Sciatic nerve (tissue), 2 donors: ENCODE measurements at regions of chr15 and their contacts with region 1.

Region 1: GRCh38 chr15:68559345-68560310 is 19.2 kb upstream of the CORO2B start:
- DNase-seq: peak; percentile 88
- ATAC-seq: peak; percentile 96

Region 2: GRCh38 chr15:68304589-68305337 is 254.9 kb before region 1 on chr15:
- intact Hi-C with region 1: loop called (anchors 10 kb)
- DNase-seq: no peak
- ATAC-seq: no peak

Region 3: GRCh38 chr15:68464448-68465090 is 95.1 kb before region 1 on chr15:
- intact Hi-C with region 1: no loop called
- DNase-seq: no peak
- ATAC-seq: peak; percentile 29

Region 4: DNA sequence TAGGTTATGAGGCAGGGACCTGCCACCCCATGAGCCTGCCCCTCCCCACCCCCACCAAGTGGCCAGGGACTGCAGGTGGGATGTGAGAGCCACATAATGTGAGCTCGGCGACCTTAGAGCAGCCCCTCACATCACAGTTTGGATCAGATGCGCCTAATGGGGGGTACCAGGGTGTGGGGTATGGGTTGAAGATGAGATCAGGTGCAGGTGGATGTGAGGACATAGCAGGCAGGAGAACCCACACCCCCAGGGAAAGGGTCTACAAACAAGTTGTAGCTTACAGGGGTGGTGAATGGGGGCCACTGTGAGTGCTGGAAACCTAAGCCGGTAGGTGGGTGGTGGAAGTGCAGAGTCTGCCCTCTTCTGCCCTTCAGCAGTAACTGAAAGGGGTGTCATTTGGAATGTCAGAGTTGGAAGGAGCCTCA is 113.2 kb after region 1 on chr15:
- intact Hi-C with region 1: loop called (anchors 5 kb)
- DNase-seq: peak; percentile 51
- ATAC-seq: no peak

Region 5: DNA sequence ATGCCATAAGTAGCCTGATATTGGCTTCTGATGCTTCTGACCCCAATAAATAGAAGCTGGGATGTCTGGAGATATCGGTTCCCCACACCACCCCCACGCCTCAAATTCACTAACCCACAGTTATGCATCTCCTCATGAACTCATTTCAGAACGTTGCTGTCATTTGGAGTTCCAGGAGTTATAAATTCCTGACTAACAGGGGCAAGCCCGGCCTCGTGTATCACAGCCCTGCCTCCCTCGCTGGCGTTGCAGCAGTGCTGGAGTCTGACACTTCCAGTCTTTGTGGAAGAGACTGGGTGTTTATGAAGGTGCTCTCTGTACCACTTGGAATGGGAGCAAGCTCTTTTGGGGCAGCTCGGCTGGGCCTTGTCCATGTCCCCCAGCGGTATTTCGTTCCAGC is 160.0 kb after region 1 on chr15:
- intact Hi-C with region 1: no loop called
- DNase-seq: no peak
- ATAC-seq: no peak

Region 6: GRCh38 chr15:68875377-68876116 is 315.9 kb after region 1 on chr15:
- intact Hi-C with region 1: loop called (anchors 10 kb)
- DNase-seq: peak; percentile 96
- ATAC-seq: peak; percentile 96